IMR-90 (cell line): ENCODE measurements at regions of chr7 and their contacts with region 1.

Region 1: DNA sequence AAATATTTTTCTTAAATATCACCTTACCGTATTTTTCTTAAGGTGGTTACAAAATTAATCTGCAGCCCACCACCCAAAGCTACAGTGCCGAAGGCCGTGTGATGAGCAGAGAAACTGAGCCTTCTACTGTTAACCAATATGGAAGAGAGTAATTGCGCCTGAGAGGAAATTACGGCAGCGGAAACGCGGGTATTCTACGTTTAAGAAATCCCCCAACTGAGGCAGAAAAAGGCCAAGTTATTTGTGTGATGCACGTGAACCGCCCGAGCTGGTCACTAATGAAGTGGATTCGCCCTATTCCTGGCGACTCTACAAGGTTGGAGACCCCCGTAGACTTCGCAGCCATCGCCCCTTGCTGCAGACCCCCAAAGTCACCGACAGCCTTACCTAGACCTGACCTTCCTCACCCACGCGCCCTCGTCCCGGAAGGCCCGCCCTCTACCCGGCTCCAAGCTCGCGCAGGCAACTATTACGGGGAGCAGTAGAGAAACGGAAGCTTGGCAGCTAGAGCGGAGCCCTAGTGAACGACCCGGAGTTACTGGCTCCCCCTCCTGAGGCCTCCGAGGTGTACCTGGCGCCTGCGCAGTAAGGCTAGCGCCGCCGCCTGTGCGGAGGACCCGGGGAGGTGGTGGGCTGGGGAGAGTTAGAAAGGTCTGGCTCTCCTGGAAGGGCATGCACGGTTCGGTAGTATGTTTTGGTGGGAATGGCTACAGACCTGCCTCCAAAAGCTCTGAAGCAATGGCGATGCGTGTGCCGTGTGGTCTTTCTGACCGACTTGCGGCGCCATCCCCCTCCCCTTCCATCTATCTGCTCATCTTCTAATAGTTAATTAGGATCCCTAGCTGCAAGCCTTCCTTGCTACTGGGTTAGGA is at the start of gene MRPS33:
- DNase-seq: peak; percentile 94
- ATAC-seq: peak; percentile 100
- H3K4me3 ChIP-seq: peak within 1 kb of the TSS; percentile 71
- H3K27ac ChIP-seq: peak within 1 kb of the TSS; percentile 85
- H3K4me1 ChIP-seq: peaks cover 2% of the 10 kb centered on the region; the same call in 1 of the 2 replicates
- H3K27me3 ChIP-seq: no peaks in the 10 kb centered on the region
- CTCF ChIP-seq: peak; percentile 87
- POLR2A ChIP-seq: peak; percentile 78
- RAD21 ChIP-seq: no peak
- total RNA-seq, gene MRPS33: 14.5 and 24.4 TPM in 2 replicates

Region 2: GRCh38 chr7:140661121-140661520 is 353.6 kb before region 1 on chr7:
- CTCF ChIA-PET with region 1: no interaction called
- POLR2A ChIA-PET with region 1: no interaction called
- dilution Hi-C with region 1: no loop called
- in situ Hi-C with region 1: no loop called
- intact Hi-C with region 1: loop called (anchors 1 kb)
- DNase-seq: peak; percentile 31
- ATAC-seq: peak; percentile 42
- H3K4me3 ChIP-seq: no peak overlapping the region
- H3K27ac ChIP-seq: no peak overlapping the region
- H3K4me1 ChIP-seq: peaks cover 4% of the 10 kb centered on the region; the same call in 1 of the 2 replicates
- H3K27me3 ChIP-seq: peaks cover 3% of the 10 kb centered on the region; the same call in 1 of the 2 replicates
- CTCF ChIP-seq: peak; percentile 41
- POLR2A ChIP-seq: no peak
- RAD21 ChIP-seq: peak; percentile 43

Region 3: DNA sequence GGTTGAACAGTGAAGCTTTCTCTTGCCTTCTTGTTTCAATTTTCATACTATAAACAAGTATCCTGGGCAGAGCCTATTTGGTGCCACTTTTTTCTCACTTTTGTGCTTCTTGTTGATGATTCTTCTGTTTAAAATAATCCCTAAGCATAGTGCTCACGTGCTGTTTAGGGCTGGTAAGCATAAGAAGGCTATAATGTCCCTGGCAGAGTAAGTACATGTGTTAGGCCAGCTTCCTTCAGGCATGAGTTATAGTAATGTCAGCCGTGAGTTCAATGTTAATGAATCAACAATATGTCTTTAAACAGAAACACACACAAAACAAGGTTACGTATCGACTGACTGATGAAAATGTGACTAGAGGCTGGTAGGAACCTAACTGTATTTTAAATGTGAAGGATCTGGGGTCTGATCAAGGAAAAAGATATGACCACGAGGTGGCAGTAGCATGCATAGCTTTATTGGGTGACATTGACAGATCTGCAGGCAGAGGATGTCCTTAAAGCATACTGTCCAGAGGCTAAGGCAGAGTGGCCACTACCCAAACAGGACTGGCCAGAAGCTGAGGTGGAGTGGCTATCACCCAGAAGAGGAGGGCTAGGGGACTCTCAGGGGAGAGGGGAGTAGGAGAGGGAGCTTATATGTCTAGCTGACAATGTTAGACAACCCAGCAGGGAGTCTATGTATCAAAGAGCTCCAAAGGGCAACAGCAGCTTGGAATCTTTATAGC is 203.8 kb before region 1 on chr7:
- CTCF ChIA-PET with region 1: interaction called, 9 read pairs
- POLR2A ChIA-PET with region 1: no interaction called
- dilution Hi-C with region 1: no loop called
- in situ Hi-C with region 1: loop called (anchors 5 kb)
- intact Hi-C with region 1: loop called (anchors 1 kb)
- DNase-seq: peak; percentile 66
- ATAC-seq: peak; percentile 94
- H3K4me3 ChIP-seq: no peak overlapping the region
- H3K27ac ChIP-seq: no peak overlapping the region
- H3K4me1 ChIP-seq: peaks cover 2% of the 10 kb centered on the region; the same call in 1 of the 2 replicates
- H3K27me3 ChIP-seq: no peaks in the 10 kb centered on the region
- CTCF ChIP-seq: peak; percentile 72
- POLR2A ChIP-seq: no peak
- RAD21 ChIP-seq: peak; percentile 70

Region 4: GRCh38 chr7:141533149-141533949 is 518.6 kb after region 1 on chr7:
- CTCF ChIA-PET with region 1: interaction called, 3 read pairs
- POLR2A ChIA-PET with region 1: no interaction called
- dilution Hi-C with region 1: no loop called
- in situ Hi-C with region 1: no loop called
- intact Hi-C with region 1: loop called (anchors 1 kb)
- DNase-seq: peak; percentile 74
- ATAC-seq: peak; percentile 89
- H3K4me3 ChIP-seq: no peak overlapping the region
- H3K27ac ChIP-seq: no peak overlapping the region
- H3K4me1 ChIP-seq: no peaks in the 10 kb centered on the region
- H3K27me3 ChIP-seq: 0 out of 2 replicates have a peak, but pooled peaks cover 2% of the 10 kb centered on the region
- CTCF ChIP-seq: peak; percentile 82
- POLR2A ChIP-seq: no peak
- RAD21 ChIP-seq: peak; percentile 80

Region 5: GRCh38 chr7:141654551-141654950 is 639.8 kb after region 1 on chr7:
- CTCF ChIA-PET with region 1: interaction called, 5 read pairs
- POLR2A ChIA-PET with region 1: no interaction called
- dilution Hi-C with region 1: no loop called
- in situ Hi-C with region 1: no loop called
- intact Hi-C with region 1: loop called (anchors 1 kb)
- DNase-seq: peak; percentile 69
- ATAC-seq: peak; percentile 81
- H3K4me3 ChIP-seq: no peak overlapping the region
- H3K27ac ChIP-seq: no peak overlapping the region
- H3K4me1 ChIP-seq: no peaks in the 10 kb centered on the region
- H3K27me3 ChIP-seq: no peaks in the 10 kb centered on the region
- CTCF ChIP-seq: peak; percentile 78
- POLR2A ChIP-seq: no peak
- RAD21 ChIP-seq: peak; percentile 70